CD8-positive, alpha-beta T cell (primary cell): ENCODE measurements at regions of chr17 and their contacts with region 1.

Region 1: GRCh38 chr17:47698749-47699535 is 5.0 kb downstream of the TBKBP1 start:
- DNase-seq: peak; percentile 69 to 91 (median 81)
- ATAC-seq: peak; percentile 49
- H3K4me3 ChIP-seq: no peak overlapping the region
- H3K4me3 Mint-ChIP-seq: no peak overlapping the region
- H3K27ac ChIP-seq: peak overlapping the region in 1 of 2 experiments; percentile 4
- H3K27ac Mint-ChIP-seq: no peak overlapping the region
- H3K4me1 ChIP-seq: peaks cover 38% of the 10 kb centered on the region
- H3K4me1 Mint-ChIP-seq: peaks cover 43% of the 10 kb centered on the region
- H3K27me3 ChIP-seq: no peaks in the 10 kb centered on the region
- H3K27me3 Mint-ChIP-seq: no peaks in the 10 kb centered on the region
- CTCF ChIP-seq: peak; percentile 96

Region 2: DNA sequence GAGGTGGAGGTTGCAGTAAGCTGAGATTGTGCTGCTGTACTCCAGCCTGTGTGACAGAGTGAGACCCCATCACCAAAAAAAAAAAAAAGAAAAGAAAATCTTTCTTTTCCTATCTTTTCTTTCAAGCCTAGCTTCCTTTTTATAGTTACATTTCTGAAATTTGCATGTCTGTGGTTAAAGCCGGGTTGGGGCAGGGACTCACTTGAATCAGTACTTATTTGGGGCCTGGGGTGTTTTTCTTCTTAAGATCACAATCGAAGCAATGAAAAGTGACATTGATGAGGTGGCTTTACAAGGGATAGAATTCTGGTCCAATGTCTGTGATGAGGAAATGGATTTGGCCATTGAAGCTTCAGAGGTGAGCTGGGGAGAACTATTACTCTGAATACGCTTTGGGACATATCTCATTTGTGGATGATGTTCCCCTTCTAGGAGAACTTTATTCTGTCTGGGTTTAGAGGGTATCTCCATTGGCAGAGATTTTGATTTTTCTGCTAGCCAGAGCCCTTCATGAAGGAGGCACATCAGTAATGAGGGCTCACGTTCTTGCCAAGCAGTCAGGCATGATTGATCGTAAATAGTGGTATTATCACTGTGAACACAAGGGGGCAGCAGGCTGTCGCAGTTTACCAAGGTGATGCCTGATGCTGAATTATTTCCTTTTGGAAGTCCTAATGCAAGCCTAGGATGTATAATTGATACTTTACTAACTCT is 34.9 kb before region 1 on chr17:
- CTCF ChIA-PET with region 1: interaction called, 10 read pairs
- POLR2A ChIA-PET with region 1: interaction called, 4 read pairs
- intact Hi-C with region 1: loop called in 1 of 2 experiments (anchors 5 kb)
- DNase-seq: peak; percentile 30 to 82 (median 62)
- ATAC-seq: peak; percentile 66
- H3K4me3 ChIP-seq: no peak overlapping the region
- H3K4me3 Mint-ChIP-seq: no peak overlapping the region
- H3K27ac ChIP-seq: peak overlapping the region in 1 of 2 experiments; percentile 6
- H3K27ac Mint-ChIP-seq: peak overlapping the region; percentile 66
- H3K4me1 ChIP-seq: peaks cover 13% of the 10 kb centered on the region
- H3K4me1 Mint-ChIP-seq: peaks cover 19% of the 10 kb centered on the region
- H3K27me3 ChIP-seq: no peaks in the 10 kb centered on the region
- H3K27me3 Mint-ChIP-seq: no peaks in the 10 kb centered on the region
- CTCF ChIP-seq: peak; percentile 88

Region 3: DNA sequence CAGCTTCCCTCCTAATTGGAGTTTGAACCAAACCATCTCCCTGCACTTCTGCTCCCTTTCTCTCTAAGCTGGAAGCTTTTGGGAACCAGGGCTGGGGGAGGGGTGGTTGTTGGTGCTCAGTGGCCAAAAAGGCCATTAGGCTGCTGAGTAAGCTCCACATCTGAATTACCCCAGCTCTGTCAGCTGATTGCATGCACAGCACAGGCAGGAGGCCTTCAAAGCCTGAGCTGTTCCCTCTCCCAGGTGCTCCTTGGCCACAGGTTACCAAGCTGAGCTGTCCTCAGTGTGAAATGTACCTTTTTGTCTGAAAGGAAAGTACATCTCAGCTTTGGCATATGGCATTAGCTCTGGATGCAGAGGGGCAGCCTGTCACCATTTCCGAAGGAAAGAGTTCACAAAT is 11.2 kb before region 1 on chr17:
- CTCF ChIA-PET with region 1: interaction called, 13 read pairs
- POLR2A ChIA-PET with region 1: no interaction called
- intact Hi-C with region 1: no loop called
- DNase-seq: no peak
- ATAC-seq: no peak
- H3K4me3 ChIP-seq: no peak overlapping the region
- H3K4me3 Mint-ChIP-seq: no peak overlapping the region
- H3K27ac ChIP-seq: no peak overlapping the region
- H3K27ac Mint-ChIP-seq: no peak overlapping the region
- H3K4me1 ChIP-seq: peaks cover 8% of the 10 kb centered on the region
- H3K4me1 Mint-ChIP-seq: peaks cover 9% of the 10 kb centered on the region
- H3K27me3 ChIP-seq: no peaks in the 10 kb centered on the region
- H3K27me3 Mint-ChIP-seq: no peaks in the 10 kb centered on the region
- CTCF ChIP-seq: no peak

Region 4: DNA sequence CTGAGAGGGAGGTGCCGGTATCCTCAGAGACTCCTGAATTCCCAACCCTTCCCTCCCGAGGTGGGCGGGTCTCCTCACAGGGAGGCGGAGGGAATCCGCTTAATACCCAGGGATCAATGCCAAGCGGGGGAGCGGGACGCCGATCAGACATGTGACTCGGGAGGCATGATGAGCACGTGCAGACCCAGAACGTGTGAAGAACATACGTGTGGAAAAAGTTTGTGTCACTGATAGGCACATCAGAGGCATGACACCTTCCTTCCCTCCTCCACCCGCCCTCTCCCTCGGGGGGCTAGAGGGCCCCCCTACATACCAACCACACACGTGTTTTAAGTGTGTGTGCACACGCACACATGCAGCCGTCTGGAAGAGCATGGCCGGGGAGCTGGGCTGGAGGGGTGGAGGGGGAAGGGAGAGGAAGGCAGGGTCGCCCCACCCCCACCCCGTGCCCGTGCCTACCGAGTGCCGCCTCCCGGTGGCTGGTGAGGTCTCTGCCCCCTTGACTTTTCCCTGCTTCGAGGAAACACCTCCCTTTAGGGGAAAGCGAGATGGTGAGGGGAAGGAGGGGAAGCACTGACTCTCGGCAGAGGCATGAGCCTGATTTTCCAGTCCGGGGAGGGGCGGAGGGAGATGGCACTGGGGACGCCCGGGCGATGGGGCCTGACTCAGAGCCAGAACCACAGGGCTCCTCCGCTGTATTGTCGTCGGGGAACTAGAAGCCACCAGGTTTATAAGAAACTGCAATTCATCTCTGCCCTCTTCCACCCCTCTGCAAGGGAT is 22.0 kb after region 1 on chr17:
- CTCF ChIA-PET with region 1: interaction called, 25 read pairs
- POLR2A ChIA-PET with region 1: no interaction called
- intact Hi-C with region 1: loop called (anchors 1 kb)
- DNase-seq: peak in 8 of 9 experiments; percentile 62 to 84 (median 75)
- ATAC-seq: peak; percentile 70
- H3K4me3 ChIP-seq: peak overlapping the region in 1 of 2 experiments; percentile 33
- H3K4me3 Mint-ChIP-seq: peak overlapping the region; percentile 53
- H3K27ac ChIP-seq: peak overlapping the region in 1 of 2 experiments; percentile 76
- H3K27ac Mint-ChIP-seq: peak overlapping the region; percentile 70
- H3K4me1 ChIP-seq: peaks cover 62% of the 10 kb centered on the region
- H3K4me1 Mint-ChIP-seq: peaks cover 58% of the 10 kb centered on the region
- H3K27me3 ChIP-seq: no peaks in the 10 kb centered on the region
- H3K27me3 Mint-ChIP-seq: no peaks in the 10 kb centered on the region
- CTCF ChIP-seq: no peak

Region 5: GRCh38 chr17:47733047-47733673 is 34.2 kb after region 1 on chr17 and contains the start of gene TBX21:
- CTCF ChIA-PET with region 1: interaction called, 94 read pairs
- POLR2A ChIA-PET with region 1: interaction called, 8 read pairs
- intact Hi-C with region 1: loop called (anchors 2 kb)
- DNase-seq: peak; percentile 81 to 96 (median 91)
- ATAC-seq: peak; percentile 85
- H3K4me3 ChIP-seq: peak within 1 kb of the TSS; percentile 70 to 99
- H3K4me3 Mint-ChIP-seq: peak within 1 kb of the TSS; percentile 97
- H3K27ac ChIP-seq: peak within 1 kb of the TSS; percentile 58 to 88
- H3K27ac Mint-ChIP-seq: peak within 1 kb of the TSS; percentile 96
- H3K4me1 ChIP-seq: peaks cover 19% of the 10 kb centered on the region
- H3K4me1 Mint-ChIP-seq: peaks cover 47% of the 10 kb centered on the region
- H3K27me3 ChIP-seq: no peaks in the 10 kb centered on the region
- H3K27me3 Mint-ChIP-seq: peaks cover 3% of the 10 kb centered on the region
- CTCF ChIP-seq: peak; percentile 43
- total RNA-seq, gene TBX21: 37.0 to 39.1 TPM

Region 6: GRCh38 chr17:47776330-47777197 is 77.6 kb after region 1 on chr17:
- CTCF ChIA-PET with region 1: interaction called, 12 read pairs
- POLR2A ChIA-PET with region 1: no interaction called
- intact Hi-C with region 1: loop called in 1 of 2 experiments (anchors 1 kb)
- DNase-seq: peak in 6 of 9 experiments; percentile 24 to 73 (median 32)
- ATAC-seq: peak; percentile 96
- H3K4me3 ChIP-seq: no peak overlapping the region
- H3K4me3 Mint-ChIP-seq: no peak overlapping the region
- H3K27ac ChIP-seq: no peak overlapping the region
- H3K27ac Mint-ChIP-seq: no peak overlapping the region
- H3K4me1 ChIP-seq: no peaks in the 10 kb centered on the region
- H3K4me1 Mint-ChIP-seq: peaks cover 3% of the 10 kb centered on the region
- H3K27me3 ChIP-seq: peaks cover 8 to 11% of the 10 kb centered on the region in 2 experiments
- H3K27me3 Mint-ChIP-seq: peaks cover 41% of the 10 kb centered on the region
- CTCF ChIP-seq: peak; percentile 88

Region 7: GRCh38 chr17:47802341-47803022 is 103.5 kb after region 1 on chr17:
- CTCF ChIA-PET with region 1: interaction called, 13 read pairs
- POLR2A ChIA-PET with region 1: no interaction called
- intact Hi-C with region 1: loop called (anchors 1 kb)
- DNase-seq: peak; percentile 27 to 73 (median 60)
- ATAC-seq: peak; percentile 92
- H3K4me3 ChIP-seq: no peak overlapping the region
- H3K4me3 Mint-ChIP-seq: no peak overlapping the region
- H3K27ac ChIP-seq: no peak overlapping the region
- H3K27ac Mint-ChIP-seq: no peak overlapping the region
- H3K4me1 ChIP-seq: no peaks in the 10 kb centered on the region
- H3K4me1 Mint-ChIP-seq: no peaks in the 10 kb centered on the region
- H3K27me3 ChIP-seq: no peaks in the 10 kb centered on the region
- H3K27me3 Mint-ChIP-seq: peaks cover 3% of the 10 kb centered on the region
- CTCF ChIP-seq: peak; percentile 54